ENCODE measurements at regions of chr20 and their contacts with region 1.

Region 1: GRCh38 chr20:60210779-60211617 is 252.8 kb downstream of the CDH26 start:
- DNase-seq: peak; percentile 60
- H3K4me3 ChIP-seq: no peak overlapping the region
- H3K27ac ChIP-seq: no peak overlapping the region
- H3K4me1 ChIP-seq: no peaks in the 10 kb centered on the region
- H3K27me3 ChIP-seq: no peaks in the 10 kb centered on the region
- CTCF ChIP-seq: peak; percentile 89

Region 2: DNA sequence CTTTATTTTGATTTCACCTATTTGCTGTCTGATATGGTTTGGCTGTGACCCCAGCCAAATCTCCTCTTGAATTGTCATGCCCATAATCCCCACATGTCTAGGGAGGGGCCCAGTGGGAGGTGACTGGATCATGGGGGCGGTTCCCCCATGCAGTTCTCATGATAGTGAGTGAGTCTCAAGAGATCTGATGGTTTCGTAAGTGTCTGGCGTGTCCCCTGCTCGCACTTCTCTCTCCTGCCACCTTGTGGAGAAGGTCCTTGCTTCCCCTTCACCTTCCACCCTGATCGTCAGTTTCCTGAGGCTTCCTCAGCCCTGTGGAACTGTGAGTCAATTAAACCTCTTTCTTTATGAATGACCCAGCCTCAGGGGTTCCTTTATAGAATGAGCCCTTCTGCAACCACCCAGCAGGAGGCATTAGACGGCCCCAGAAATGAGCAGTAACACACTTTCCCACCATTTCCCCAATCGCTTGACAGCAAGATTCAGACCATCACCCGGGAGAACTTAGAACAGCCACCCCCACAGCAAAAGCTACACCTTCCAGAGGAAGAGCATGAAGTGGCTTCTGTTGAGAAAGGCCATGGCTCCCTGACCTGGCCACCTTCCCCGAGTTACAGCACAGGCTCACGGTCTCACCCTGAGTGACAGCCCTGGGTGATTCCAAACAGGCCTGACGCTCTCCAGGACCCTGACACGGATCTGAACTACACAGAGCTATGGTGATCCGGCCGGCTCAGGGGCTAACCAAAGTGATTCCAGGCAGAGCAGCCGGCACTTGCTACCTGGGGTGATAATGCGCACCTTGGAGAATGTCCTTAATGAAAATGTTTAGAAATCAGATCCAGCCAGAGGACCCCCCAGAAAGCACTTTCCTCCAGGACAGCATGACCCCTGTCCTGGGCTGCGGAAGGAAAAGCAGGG is 909.9 kb after region 1 on chr20:
- CTCF ChIA-PET with region 1: no interaction called
- POLR2A ChIA-PET with region 1: no interaction called
- intact Hi-C with region 1: loop called (anchors 2 kb)
- DNase-seq: peak; percentile 87
- H3K4me3 ChIP-seq: no peak overlapping the region
- H3K27ac ChIP-seq: no peak overlapping the region
- H3K4me1 ChIP-seq: no peaks in the 10 kb centered on the region
- H3K27me3 ChIP-seq: peaks cover 25% of the 10 kb centered on the region
- CTCF ChIP-seq: peak; percentile 73

Region 3: DNA sequence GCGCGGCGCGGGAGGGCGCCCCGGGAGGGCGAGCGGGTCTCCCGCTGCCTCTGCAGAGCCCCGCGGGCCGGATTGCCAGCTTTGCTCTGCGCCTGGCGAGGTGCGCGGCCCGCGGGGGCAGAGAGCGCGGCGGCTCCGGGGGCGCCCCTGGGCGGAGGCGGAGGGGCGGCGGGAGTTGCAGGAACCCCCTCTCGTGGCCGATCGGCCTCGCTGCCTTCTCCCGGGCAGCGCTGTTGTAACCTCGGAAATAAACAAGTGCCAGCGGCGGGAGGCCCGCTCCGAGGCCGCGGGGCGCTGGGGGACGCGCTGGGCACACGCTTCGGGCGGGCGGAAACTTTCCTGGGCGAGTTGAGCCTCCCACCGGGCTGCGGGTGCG is 1042.3 kb after region 1 on chr20:
- CTCF ChIA-PET with region 1: no interaction called
- POLR2A ChIA-PET with region 1: no interaction called
- intact Hi-C with region 1: loop called (anchors 10 kb)
- DNase-seq: peak; percentile 60
- H3K4me3 ChIP-seq: peak overlapping the region; percentile 62
- H3K27ac ChIP-seq: peak overlapping the region; percentile 57
- H3K4me1 ChIP-seq: peaks cover 17% of the 10 kb centered on the region
- H3K27me3 ChIP-seq: peaks cover 38% of the 10 kb centered on the region
- CTCF ChIP-seq: peak; percentile 30; the same call in 1 of the 2 replicates

Region 4: GRCh38 chr20:61886721-61887594 is 1676.0 kb after region 1 on chr20:
- CTCF ChIA-PET with region 1: no interaction called
- POLR2A ChIA-PET with region 1: no interaction called
- intact Hi-C with region 1: loop called (anchors 5 kb)
- DNase-seq: peak; percentile 74
- H3K4me3 ChIP-seq: no peak overlapping the region
- H3K27ac ChIP-seq: no peak overlapping the region
- H3K4me1 ChIP-seq: no peaks in the 10 kb centered on the region
- H3K27me3 ChIP-seq: peaks cover 4% of the 10 kb centered on the region
- CTCF ChIP-seq: peak; percentile 95

Region 5: DNA sequence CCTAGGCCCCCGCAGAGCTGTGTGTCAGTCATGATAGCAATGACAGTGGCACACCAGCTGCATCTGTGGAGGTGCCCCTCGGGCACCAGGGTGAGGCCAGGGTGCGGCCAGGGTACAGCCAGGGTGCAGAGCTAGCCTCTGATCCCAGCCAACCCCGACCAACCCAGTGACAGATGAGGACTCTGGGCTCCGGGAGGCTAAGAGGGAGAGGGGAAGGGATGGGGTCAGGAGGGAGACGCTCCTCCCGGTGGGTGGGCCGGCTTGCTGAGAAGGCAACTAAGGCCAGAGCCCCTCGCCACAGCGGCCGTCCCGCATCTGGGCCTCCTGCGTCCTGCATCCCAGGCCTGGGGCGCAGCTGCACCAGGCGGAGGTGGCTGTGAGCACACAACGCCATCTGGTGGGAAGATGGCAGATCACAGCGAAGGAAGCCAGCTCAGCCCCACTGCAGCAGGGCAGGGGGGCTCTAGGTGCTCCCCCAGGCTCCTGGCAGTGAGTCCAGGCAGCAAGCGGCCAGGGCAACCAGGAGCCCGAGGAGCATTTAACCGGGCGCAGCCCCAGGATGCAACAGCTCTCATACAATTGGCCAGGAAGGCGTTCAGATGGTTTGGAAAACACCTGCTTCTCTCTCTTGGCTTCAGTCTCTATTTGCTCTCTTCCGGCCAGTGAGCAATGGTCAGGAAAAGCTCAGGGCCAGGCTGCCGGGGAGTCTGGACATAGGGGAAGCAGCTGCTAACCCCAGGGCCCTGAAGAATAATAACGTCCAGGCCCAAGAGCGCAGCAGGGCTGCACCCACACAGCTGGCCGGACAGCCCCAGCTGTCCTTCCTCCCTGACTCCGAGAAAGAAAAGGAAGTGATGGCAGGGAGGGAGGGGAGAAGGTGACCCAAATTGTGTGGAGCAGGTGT is 1685.3 kb after region 1 on chr20:
- CTCF ChIA-PET with region 1: interaction called, 5 read pairs
- POLR2A ChIA-PET with region 1: no interaction called
- intact Hi-C with region 1: loop called (anchors 5 kb)
- DNase-seq: peak; percentile 50
- H3K4me3 ChIP-seq: no peak overlapping the region
- H3K27ac ChIP-seq: no peak overlapping the region
- H3K4me1 ChIP-seq: no peaks in the 10 kb centered on the region
- H3K27me3 ChIP-seq: peaks cover 30% of the 10 kb centered on the region
- CTCF ChIP-seq: peak; percentile 84

Measured in A673 (cell line).